ENCODE measurements at regions of chr3 and their contacts with region 1.

Region 1: DNA sequence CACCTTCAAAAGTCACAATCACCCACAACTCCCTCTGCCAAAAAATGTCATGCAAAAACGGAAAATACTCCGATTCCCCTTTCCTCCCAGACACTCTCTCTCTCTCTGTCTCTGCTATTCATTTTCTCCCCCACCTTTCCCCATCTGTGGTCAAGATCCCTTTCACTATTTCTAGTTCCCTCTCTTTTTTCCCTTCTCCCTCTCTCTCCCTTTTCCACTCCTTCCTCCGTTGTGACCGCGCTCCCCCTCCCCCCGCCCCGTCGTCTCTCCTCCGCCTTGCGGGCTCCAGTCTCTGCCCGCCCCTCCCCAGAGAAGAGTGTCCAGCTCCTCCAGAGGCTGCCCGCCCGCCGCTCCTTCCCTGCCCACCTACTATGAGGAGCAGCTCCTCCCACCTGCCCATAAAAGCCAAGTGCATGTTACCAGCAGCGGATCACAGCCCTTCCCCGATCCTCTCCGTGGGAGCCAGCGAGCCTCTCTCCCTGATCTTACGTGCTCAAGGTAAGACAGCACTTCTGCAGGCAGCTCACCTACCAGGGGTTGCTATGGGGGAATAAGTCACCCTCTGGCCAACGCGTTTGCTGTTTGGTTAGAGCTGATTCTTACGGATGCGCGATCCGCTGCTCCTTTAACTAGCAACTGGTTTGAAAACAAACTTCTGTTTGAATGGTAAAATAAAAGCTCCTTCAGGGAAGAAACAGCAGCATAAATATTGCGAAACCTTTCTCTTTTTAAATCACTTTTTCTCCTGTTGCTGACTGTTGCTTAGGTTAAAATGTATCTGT is at the start of gene COL8A1:
- DNase-seq: peak in 1 of 2 experiments; percentile 72
- H3K4me3 ChIP-seq: peak within 1 kb of the TSS; percentile 48
- H3K27ac ChIP-seq: peak within 1 kb of the TSS; percentile 35
- H3K4me1 ChIP-seq: peaks cover 19% of the 10 kb centered on the region
- H3K27me3 ChIP-seq: peaks cover 6% of the 10 kb centered on the region; the same call in 1 of the 2 replicates
- CTCF ChIP-seq: no peak
- total RNA-seq, gene COL8A1: 6.6 and 8.1 TPM in 2 replicates

Region 2: GRCh38 chr3:98630416-98630815 is 1007.9 kb before region 1 on chr3:
- CTCF ChIA-PET with region 1: no interaction called
- POLR2A ChIA-PET with region 1: no interaction called
- intact Hi-C with region 1: no loop called
- DNase-seq: no peak
- H3K4me3 ChIP-seq: no peak overlapping the region
- H3K27ac ChIP-seq: no peak overlapping the region
- H3K4me1 ChIP-seq: no peaks in the 10 kb centered on the region
- H3K27me3 ChIP-seq: no peaks in the 10 kb centered on the region
- CTCF ChIP-seq: no peak

Region 3: DNA sequence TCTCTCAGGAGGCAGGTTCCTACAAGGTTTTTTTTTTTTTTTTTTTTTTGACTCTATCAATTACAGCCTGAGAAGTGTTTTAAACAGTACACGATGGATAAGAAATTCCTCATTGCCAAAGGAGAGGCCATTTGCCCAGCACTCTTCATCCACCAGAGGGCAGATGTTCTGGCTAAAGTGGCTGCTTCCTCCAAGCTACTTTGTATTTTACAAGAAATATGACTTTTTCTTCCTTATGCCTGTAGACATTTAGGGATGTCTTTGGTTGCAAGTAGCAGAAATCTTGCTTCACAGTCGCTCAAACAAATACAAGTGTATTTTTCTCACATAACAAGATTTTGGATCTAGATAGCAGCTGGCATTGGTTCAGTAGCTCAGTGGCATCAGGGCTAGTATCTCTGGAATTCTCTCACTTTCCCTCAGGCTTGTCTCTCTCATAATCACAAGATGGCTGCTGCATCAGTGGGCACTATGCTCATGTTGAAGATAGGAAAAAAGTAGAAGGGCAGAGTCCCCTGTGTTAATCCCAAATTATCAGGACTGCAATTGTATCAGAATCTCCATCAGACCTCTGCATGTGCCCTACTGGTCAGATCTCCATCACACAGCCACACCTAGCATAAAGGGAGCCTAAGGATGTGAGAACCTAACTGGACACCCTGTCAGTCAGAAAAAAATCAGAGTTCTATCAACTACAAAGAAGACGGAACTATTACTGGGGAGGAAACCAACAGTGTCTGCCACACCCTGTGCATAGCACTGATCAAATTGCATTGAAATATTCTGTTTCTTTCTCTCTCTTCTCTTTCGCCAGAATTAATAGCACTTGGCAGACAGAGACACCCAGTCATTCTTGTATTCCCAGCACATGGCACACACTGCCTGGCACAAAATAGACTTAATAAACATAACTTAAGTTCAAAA is 138.9 kb before region 1 on chr3:
- CTCF ChIA-PET with region 1: no interaction called
- POLR2A ChIA-PET with region 1: no interaction called
- intact Hi-C with region 1: loop called (anchors 2 kb)
- DNase-seq: peak; percentile 46 to 48
- H3K4me3 ChIP-seq: no peak overlapping the region
- H3K27ac ChIP-seq: no peak overlapping the region
- H3K4me1 ChIP-seq: no peaks in the 10 kb centered on the region
- H3K27me3 ChIP-seq: no peaks in the 10 kb centered on the region
- CTCF ChIP-seq: peak; percentile 86

Region 4: GRCh38 chr3:99659951-99660350 is 21.6 kb after region 1 on chr3:
- CTCF ChIA-PET with region 1: no interaction called
- POLR2A ChIA-PET with region 1: interaction called, 3 read pairs
- intact Hi-C with region 1: loop called (anchors 2 kb)
- DNase-seq: no peak
- H3K4me3 ChIP-seq: no peak overlapping the region
- H3K27ac ChIP-seq: no peak overlapping the region
- H3K4me1 ChIP-seq: no peaks in the 10 kb centered on the region
- H3K27me3 ChIP-seq: no peaks in the 10 kb centered on the region
- CTCF ChIP-seq: no peak

Region 5: GRCh38 chr3:99747915-99748314 is 109.6 kb after region 1 on chr3:
- CTCF ChIA-PET with region 1: interaction called, 12 read pairs
- POLR2A ChIA-PET with region 1: interaction called, 3 read pairs
- intact Hi-C with region 1: no loop called
- DNase-seq: peak; percentile 33 to 39
- H3K4me3 ChIP-seq: no peak overlapping the region
- H3K27ac ChIP-seq: no peak overlapping the region
- H3K4me1 ChIP-seq: no peaks in the 10 kb centered on the region
- H3K27me3 ChIP-seq: no peaks in the 10 kb centered on the region
- CTCF ChIP-seq: peak; percentile 45; the same call in 1 of the 2 replicates

Region 6: GRCh38 chr3:101388706-101389105 is 1750.3 kb after region 1 on chr3:
- CTCF ChIA-PET with region 1: no interaction called
- POLR2A ChIA-PET with region 1: interaction called, 10 read pairs
- intact Hi-C with region 1: no loop called
- DNase-seq: no peak
- H3K4me3 ChIP-seq: no peak overlapping the region
- H3K27ac ChIP-seq: no peak overlapping the region
- H3K4me1 ChIP-seq: no peaks in the 10 kb centered on the region
- H3K27me3 ChIP-seq: no peaks in the 10 kb centered on the region
- CTCF ChIP-seq: no peak

Measured in PC-9 (cell line).